HepG2 (cell line): ENCODE measurements at regions of chr2 and their contacts with region 1.

Region 1: DNA sequence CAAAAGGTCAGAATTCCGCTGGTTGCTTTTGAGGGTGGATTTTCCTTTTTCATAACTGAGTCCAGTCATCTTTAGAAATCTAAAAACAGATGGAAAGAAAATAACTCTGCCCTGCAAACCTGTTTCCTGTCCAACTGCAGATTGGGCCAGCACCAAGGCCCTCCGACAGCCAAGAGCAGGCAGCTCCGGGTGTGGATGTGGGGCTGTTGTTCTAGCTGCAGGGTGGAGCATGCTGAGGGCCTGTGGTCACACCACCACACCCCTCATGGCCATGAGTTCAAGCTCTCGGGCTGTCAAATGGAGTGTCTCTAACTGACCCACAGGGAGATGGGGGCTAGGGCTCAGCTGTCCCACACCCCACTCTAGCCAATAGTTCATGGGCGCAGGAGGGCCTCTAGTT is 69.3 kb upstream of the BZW1 start:
- DNase-seq: no peak
- ATAC-seq: peak; percentile 6; the same call in 1 of the 3 replicates
- H3K4me3 ChIP-seq: no peak overlapping the region
- H3K27ac ChIP-seq: peak overlapping the region; percentile 69
- H3K4me1 ChIP-seq: peaks cover 49% of the 10 kb centered on the region
- H3K27me3 ChIP-seq: peaks cover 0 to 16% of the 10 kb centered on the region in 2 experiments; a peak in 2 of 5 replicates
- CTCF ChIP-seq: no peak
- EP300 ChIP-seq: no peak
- POLR2A ChIP-seq: no peak
- RAD21 ChIP-seq: no peak

Region 2: DNA sequence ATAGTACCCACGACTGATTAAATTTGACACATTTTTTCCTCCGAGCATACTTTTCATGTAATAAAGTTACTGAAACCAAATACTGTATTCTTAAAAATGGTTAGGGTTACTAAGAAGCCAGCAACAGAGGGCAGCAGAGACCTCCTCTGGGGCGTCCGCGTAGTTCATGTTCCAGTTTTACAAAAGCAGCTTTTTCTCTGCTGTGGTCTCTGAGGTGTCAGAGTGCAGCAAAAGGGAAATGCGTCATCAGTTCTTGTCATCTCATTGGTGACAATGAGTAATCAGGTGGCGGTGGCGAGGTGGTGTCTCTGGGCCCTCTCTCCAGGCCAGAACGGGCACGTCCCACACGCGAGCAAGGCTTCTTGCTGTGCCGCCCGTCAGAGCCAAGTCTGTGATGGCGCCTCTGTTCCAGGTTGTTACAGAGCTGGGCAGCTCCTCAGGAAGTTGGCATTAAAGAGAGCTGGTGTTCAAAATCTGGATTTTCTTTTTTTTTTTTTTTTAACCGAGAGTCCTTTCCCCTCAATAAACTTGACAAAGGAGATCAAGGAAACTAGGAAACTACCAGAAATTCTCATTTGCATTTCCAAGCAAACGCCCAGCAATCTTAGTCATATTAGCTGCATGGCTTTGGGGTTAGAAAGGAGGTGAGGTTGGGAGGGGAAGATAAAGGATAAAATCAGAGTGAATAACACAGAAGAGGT is 29.3 kb before region 1 on chr2:
- CTCF ChIA-PET with region 1: no interaction called
- POLR2A ChIA-PET with region 1: interaction called, 11 read pairs
- in situ Hi-C with region 1: loop called (anchors 5 kb)
- intact Hi-C with region 1: loop called (anchors 5 kb)
- DNase-seq: peak; percentile 96
- ATAC-seq: peak; percentile 94
- H3K4me3 ChIP-seq: peak overlapping the region; percentile 35 to 65 (median 50); a peak in 5 of 6 replicates
- H3K27ac ChIP-seq: peak overlapping the region; percentile 41
- H3K4me1 ChIP-seq: peaks cover 20% of the 10 kb centered on the region
- H3K27me3 ChIP-seq: no peaks in the 10 kb centered on the region; a peak in 1 of 5 replicates
- CTCF ChIP-seq: peak; percentile 94
- EP300 ChIP-seq: peak in 1 of 2 experiments; percentile 47; a peak in 1 of 4 replicates
- POLR2A ChIP-seq: peak; percentile 74 to 92
- RAD21 ChIP-seq: peak; percentile 93

Region 3: GRCh38 chr2:200756618-200757321 is 14.3 kb after region 1 on chr2:
- CTCF ChIA-PET with region 1: no interaction called
- POLR2A ChIA-PET with region 1: interaction called, 140 read pairs
- in situ Hi-C with region 1: no loop called
- intact Hi-C with region 1: loop called (anchors 2 kb)
- DNase-seq: peak; percentile 95
- ATAC-seq: peak; percentile 93
- H3K4me3 ChIP-seq: peak overlapping the region; percentile 5 to 59 (median 11); a peak in 5 of 6 replicates
- H3K27ac ChIP-seq: peak overlapping the region; percentile 64
- H3K4me1 ChIP-seq: peaks cover 79% of the 10 kb centered on the region
- H3K27me3 ChIP-seq: no peaks in the 10 kb centered on the region; a peak in 2 of 5 replicates
- CTCF ChIP-seq: no peak
- EP300 ChIP-seq: peak; percentile 33 to 91; a peak in 2 of 4 replicates
- POLR2A ChIP-seq: peak; percentile 37 to 50; a peak in 2 of 4 replicates
- RAD21 ChIP-seq: peak; percentile 22; the same call in 1 of the 2 replicates

Region 4: DNA sequence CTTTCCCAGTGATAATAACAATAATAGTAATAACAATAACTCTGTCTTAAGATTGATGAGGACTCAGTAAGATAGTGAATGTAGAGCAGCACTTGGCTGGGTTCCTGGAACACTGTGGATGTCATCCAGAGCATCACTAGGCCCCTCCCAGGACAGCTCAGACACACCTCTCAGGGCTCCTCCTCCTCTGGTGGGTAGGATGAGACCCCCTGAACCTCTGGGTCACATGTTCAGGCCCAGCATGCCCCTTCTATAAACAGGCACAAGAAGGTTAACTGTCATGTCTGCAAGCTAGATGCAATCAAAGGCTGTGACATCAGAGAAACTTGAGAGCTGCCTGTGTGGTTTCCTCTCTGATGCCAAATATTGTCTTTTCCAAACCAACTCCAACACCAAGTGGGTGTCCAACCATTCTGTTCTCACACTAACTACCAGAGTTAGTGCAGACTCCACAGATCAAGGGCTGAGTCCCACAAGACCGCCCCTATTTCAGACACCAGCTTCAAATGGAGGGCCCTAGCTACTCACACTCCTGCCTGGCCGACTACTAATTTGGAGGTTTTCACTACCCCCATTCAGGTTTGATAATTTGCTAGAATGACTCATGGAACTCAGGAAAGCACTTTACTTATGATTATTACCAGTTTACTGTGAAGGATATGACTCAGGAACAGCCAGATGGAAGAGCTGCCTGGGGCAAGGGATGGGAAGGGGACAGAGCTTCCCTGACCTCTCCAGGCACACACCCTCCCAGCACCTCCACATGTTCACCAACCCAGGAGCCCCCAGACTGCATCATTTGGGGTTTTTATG is 22.9 kb after region 1 on chr2:
- CTCF ChIA-PET with region 1: no interaction called
- POLR2A ChIA-PET with region 1: interaction called, 140 read pairs
- in situ Hi-C with region 1: no loop called
- intact Hi-C with region 1: no loop called
- DNase-seq: peak; percentile 34
- ATAC-seq: peak; percentile 42; the same call in 2 of the 3 replicates
- H3K4me3 ChIP-seq: no peak overlapping the region
- H3K27ac ChIP-seq: no peak overlapping the region
- H3K4me1 ChIP-seq: peaks cover 30% of the 10 kb centered on the region
- H3K27me3 ChIP-seq: peaks cover 3 to 17% of the 10 kb centered on the region in 2 experiments; a peak in 3 of 5 replicates
- CTCF ChIP-seq: no peak
- EP300 ChIP-seq: no peak
- POLR2A ChIP-seq: no peak
- RAD21 ChIP-seq: no peak